Head of caudate nucleus (tissue), 42 donors: ENCODE measurements at regions of chr1 and their contacts with region 1.

Region 1: GRCh38 chr1:91997607-91998195 is 32.1 kb upstream of the EPHX4 start:
- DNase-seq: peak in 26 of 42 donors; percentile 10 to 77 (median 44)

Region 2: DNA sequence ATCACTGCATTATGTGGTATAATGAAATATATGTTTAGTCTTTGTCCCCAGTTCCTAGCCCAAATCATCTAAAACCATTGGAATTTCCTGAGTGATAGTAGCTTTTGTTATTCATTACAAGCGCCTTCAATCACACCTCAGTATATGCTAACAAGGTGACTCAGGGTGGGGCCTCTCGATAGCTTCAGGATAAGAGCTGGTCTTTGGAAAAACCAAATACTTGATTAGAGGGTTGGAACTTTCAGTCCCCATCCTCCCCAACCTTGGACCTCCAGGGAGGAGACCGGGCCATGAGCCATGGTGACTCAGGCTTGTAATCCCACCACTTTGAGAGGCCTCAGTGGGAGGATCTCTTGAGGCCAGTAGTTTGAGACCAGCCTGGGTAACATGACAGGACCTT is 53.6 kb before region 1 on chr1:
- intact Hi-C with region 1: no loop called
- DNase-seq: no peak

Region 3: DNA sequence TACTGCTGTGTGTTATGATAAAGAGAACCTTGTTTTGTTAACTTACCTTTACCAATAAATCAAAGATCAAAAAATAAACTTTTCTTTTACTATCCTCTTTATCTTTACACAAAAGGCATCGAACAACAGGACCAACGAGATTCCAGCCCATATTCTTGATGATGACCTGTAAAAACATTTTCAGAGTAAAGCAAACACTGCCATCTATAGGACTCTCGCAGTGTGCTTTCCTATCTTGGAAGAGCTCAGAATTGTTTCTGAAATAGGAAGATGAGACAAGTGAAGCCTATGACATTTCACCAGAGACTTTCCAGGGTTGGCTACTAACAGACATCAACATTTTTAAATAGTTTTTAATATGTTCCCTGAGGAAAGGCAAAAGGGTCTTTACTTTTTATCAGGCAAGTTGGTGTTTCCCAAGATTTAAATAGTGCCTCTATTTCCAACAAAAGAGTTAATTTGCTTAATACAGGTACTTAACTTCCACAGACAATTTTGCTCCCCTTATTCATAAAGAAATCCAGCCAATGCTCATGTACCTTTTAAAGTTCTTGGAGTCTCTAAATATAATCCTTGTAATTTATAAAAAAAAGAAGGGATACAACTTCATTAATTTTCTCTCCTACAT is 293.8 kb after region 1 on chr1:
- intact Hi-C with region 1: loop called (anchors 5 kb)
- DNase-seq: peak in 12 of 42 donors; percentile 12 to 63 (median 32)

Region 4: GRCh38 chr1:92376345-92376744 is 378.6 kb after region 1 on chr1:
- intact Hi-C with region 1: no loop called
- DNase-seq: no peak